ENCODE measurements at regions of chr12 and their contacts with region 1.

Region 1: GRCh38 chr12:57261428-57261865 is 10.5 kb upstream of the STAC3 start:
- DNase-seq: no peak
- H3K4me3 ChIP-seq: no peak overlapping the region
- H3K4me1 ChIP-seq: no peaks in the 10 kb centered on the region
- H3K27me3 ChIP-seq: no peaks in the 10 kb centered on the region

Region 2: DNA sequence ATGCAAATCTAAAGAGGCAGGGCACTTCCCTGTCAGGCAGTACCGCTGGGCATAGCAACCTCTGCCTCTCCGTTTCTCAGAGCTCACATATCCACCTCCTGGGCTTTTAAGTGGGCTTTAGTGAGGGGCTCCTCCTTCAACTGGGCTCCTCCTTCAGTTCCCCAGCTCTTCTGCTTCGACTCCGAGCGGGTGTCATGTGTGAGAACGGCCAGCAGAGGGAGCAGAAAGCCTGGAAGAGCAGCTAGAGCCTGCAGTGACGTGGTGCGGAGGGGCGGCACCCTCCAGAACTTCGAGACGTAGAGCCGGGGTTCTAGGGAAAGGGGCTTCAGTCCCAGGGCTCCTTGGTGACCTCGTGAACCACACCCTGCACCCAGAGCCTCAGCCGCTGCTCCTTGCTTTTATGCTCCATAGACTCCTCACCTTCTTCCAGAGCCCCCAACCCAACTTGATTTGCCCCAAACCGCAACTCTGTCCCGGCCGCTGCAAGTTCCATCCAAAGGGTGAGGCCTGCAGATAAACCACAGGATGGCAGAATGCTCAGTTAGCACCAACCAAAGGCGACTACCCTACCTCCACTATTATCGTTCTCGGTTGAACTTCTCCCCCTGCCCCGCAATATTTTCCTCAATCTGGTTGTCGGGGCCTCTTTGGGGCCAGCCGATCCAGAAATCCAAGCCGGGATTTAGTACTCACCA is 197.8 kb after region 1 on chr12:
- in situ Hi-C with region 1: loop called (anchors 5 kb)
- DNase-seq: peak; percentile 92 to 97
- H3K4me3 ChIP-seq: peak overlapping the region; percentile 49
- H3K4me1 ChIP-seq: peaks cover 17% of the 10 kb centered on the region
- H3K27me3 ChIP-seq: no peaks in the 10 kb centered on the region

Measured in HAP-1 (cell line).